ENCODE measurements at regions of chr11 and their contacts with region 1.

Region 1: DNA sequence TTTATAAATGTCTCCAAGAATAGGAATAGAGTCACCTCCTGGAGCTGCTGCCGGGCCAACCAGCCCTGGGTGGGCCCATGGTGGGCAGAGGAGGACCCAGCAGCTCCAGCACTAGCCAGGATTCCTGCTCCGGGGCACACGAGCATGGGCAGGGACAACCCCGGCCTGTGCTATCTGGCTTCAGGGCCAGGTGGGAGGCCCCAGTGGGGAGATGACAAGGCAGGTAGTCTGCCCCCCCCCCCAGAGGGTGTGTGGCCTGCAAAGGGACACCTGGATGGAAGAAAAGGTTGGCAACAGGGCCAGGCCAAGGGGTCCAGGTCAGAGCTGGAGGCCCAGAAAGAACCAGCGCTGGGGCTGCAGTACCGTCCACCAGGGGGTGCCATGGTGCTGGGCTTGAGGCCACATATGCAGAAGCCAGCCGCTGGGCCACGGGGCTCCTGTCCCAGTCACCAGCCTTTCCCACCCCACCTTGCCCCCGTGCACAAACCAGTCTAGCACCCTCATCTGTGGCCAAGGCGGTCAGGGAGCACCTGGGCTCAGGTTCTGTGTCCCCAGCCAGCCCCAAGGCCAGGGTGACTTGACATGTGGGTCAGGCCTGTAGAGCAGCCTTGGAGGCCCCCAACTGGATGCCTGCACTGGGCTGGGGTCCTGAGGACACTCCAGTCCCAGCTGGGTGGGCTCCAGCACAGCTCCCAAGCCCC is 3.5 kb downstream of the TSPAN32 start:
- DNase-seq: no peak
- H3K4me3 ChIP-seq: peak overlapping the region in 3 of 4 donors; percentile 5 to 28 (median 22)
- H3K27ac ChIP-seq: peak overlapping the region; percentile 79 to 89 (median 88)
- H3K4me1 ChIP-seq: peaks cover 50 to 59% (median 54%) of the 10 kb centered on the region in 4 donors
- H3K27me3 ChIP-seq: no peaks in the 10 kb centered on the region
- CTCF ChIP-seq: peak; percentile 94 to 96 (median 94)
- EP300 ChIP-seq: no peak
- POLR2A ChIP-seq: no peak

Region 2: DNA sequence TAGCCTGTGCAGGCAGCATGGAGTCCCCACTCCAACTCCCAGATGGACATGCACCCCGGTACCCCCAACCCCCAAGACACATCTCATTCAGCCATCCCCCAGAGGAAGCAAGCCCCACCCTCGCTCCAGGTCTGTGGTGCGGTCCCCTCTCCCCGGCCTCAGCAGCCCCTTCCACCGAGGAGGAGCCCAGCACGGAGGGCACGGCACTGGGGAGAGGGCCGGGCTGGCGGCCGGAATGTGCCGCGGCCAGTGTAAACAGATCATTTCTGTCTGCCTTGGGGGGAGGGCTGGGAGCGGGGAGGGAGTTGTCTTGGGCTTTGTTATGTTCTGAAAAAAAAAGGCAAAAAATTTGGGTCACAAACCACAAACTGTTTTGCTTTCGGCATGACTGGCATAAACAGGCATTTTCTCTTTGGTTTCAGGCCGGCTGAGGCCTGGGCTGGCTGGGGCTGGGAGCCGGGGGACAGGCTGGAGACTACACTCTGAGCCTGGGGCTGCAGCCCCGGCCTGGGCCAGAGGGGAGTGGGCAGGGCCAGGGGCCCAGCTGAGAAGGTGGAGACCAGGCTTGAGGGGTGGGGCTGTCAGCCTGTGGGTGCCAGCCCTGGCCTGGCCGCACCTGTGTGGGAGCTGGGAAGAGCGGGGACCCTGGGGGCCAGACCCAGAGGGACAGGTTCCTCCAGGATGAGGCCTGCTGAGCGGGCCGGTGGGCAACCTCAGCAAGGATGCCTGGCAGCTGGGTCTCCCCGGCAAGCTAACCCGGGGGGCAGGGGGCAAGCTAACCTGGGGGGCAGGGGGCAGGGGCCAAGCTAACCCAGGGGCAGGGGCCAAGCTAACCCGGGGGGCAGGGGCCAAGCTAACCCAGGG is 182.8 kb before region 1 on chr11:
- intact Hi-C with region 1: no loop called
- DNase-seq: no peak
- H3K4me3 ChIP-seq: no peak overlapping the region
- H3K27ac ChIP-seq: no peak overlapping the region
- H3K4me1 ChIP-seq: no peaks in the 10 kb centered on the region
- H3K27me3 ChIP-seq: peaks cover 0 to 56% (median 4%) of the 10 kb centered on the region in 4 donors
- CTCF ChIP-seq: no peak
- EP300 ChIP-seq: no peak
- POLR2A ChIP-seq: no peak

Region 3: DNA sequence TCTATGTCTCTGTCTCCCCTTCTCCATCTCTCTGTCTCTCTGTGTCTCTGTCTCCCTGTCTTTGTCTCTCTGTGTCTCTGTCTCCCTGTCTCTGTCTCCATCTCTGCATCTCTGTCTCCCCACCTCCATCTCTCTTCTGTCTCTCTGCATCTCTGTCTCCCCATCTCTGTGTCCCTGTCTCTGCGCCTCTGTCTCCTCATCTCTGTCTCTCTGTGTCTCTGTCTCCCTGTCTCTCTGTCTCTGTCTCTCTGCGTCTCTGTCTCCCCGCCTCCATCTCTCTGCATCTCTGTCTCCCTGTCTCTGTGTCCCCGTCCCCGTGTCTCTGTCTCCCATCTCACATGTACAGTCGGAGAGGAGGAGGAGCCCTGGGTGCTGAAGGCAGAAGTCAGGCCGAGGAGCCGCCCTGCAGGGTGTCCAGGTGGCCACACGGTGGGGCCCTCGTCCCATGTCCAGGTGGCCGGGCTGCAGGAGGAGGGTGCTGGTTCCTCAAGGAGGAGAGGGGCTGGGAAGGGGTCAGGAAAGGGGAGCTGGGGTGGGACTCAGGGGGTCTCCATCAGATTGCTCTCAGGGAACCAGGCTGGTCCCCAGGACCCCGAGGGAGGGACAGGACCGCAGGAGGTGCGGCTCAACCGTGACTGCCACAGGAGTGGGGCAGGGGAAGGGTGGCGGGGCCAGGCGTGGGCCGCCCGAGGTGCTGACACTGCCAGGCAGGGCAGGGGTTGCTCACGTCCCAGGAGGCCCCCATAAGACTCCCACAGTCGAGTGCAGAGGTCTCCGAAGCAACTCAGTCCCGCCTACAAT is 108.1 kb before region 1 on chr11:
- intact Hi-C with region 1: loop called (anchors 2 kb)
- DNase-seq: peak; percentile 94
- H3K4me3 ChIP-seq: no peak overlapping the region
- H3K27ac ChIP-seq: no peak overlapping the region
- H3K4me1 ChIP-seq: peaks cover 0 to 4% (median 0%) of the 10 kb centered on the region in 4 donors
- H3K27me3 ChIP-seq: peaks cover 0 to 28% (median 0%) of the 10 kb centered on the region in 4 donors
- CTCF ChIP-seq: peak; percentile 76 to 92 (median 88)
- EP300 ChIP-seq: no peak
- POLR2A ChIP-seq: no peak

Region 4: DNA sequence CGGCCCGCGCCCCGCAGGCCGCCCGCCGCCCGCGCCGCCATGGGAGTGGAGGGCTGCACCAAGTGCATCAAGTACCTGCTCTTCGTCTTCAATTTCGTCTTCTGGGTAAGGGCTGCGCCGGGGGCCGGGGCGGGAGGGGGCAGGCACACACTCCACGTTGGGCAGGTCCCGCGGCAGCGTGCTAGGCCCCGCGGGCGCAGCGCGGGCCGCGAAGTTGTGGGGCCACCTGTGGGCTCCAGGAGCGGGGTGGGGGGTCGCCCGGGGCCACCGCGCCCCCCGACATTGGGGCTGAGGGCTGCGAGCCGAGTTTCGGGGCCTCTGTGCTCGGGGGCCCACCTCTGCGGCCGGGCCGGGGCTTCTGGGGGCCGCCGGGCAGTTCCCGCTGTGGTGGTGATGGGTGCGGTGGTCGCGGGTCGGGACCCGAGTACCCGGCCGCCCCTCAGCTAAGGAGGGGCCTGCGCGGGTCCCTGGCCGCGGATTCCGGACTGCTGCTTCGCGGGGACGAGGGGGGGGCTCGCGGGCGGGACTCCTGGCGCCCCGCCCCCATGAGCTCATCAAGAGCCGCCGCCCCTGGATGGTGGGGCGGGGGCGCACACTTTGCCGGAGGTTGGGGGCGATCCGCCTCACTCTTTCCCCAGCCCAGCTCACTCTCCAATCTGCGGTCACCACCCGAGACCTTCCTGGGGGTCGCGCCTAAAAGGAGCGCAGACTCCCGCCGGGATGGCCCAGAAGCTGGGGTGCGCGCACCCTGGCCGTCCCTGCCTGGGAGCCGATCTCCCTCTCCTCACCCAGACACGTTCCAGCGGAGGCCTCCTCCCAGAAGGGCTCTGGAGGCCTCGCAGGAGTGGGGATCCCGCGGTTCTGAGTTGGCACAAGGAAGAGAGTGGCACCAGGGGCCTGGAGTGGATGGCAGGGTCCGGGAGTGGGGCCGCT is 72.5 kb after region 1 on chr11:
- intact Hi-C with region 1: loop called (anchors 2 kb)
- DNase-seq: no peak
- H3K4me3 ChIP-seq: peak overlapping the region; percentile 89 to 100 (median 100)
- H3K27ac ChIP-seq: peak overlapping the region; percentile 98 to 100 (median 100)
- H3K4me1 ChIP-seq: peaks cover 50 to 64% (median 53%) of the 10 kb centered on the region in 4 donors
- H3K27me3 ChIP-seq: no peaks in the 10 kb centered on the region
- CTCF ChIP-seq: no peak
- EP300 ChIP-seq: no peak
- POLR2A ChIP-seq: no peak

Region 5: GRCh38 chr11:2400069-2400760 is 94.9 kb after region 1 on chr11 and contains the start of gene TSSC4:
- intact Hi-C with region 1: no loop called
- DNase-seq: peak; percentile 100
- H3K4me3 ChIP-seq: peak within 1 kb of the TSS; percentile 72 to 86 (median 86)
- H3K27ac ChIP-seq: peak within 1 kb of the TSS; percentile 93 to 99 (median 96)
- H3K4me1 ChIP-seq: peaks cover 25 to 45% (median 31%) of the 10 kb centered on the region in 4 donors
- H3K27me3 ChIP-seq: no peaks in the 10 kb centered on the region
- CTCF ChIP-seq: peak; percentile 94 to 100 (median 99)
- EP300 ChIP-seq: peak; percentile 97
- POLR2A ChIP-seq: peak; percentile 91
- total RNA-seq, gene TSSC4: 46.9 to 76.9 (median 70.6) TPM

Region 6: GRCh38 chr11:2420502-2421225 is 115.4 kb after region 1 on chr11:
- intact Hi-C with region 1: loop called (anchors 1 kb)
- DNase-seq: no peak
- H3K4me3 ChIP-seq: peak overlapping the region in 2 of 4 donors; percentile 15 to 29
- H3K27ac ChIP-seq: no peak overlapping the region
- H3K4me1 ChIP-seq: peaks cover 5 to 19% (median 15%) of the 10 kb centered on the region in 4 donors
- H3K27me3 ChIP-seq: peaks cover 0 to 33% (median 0%) of the 10 kb centered on the region in 4 donors
- CTCF ChIP-seq: peak; percentile 90 to 95 (median 92)
- EP300 ChIP-seq: no peak
- POLR2A ChIP-seq: no peak

Region 7: GRCh38 chr11:2489083-2489482 is 183.8 kb after region 1 on chr11:
- intact Hi-C with region 1: no loop called
- DNase-seq: peak; percentile 53
- H3K4me3 ChIP-seq: no peak overlapping the region
- H3K27ac ChIP-seq: no peak overlapping the region
- H3K4me1 ChIP-seq: no peaks in the 10 kb centered on the region
- H3K27me3 ChIP-seq: peaks cover 0 to 36% (median 0%) of the 10 kb centered on the region in 4 donors
- CTCF ChIP-seq: no peak
- EP300 ChIP-seq: no peak
- POLR2A ChIP-seq: no peak

Region 8: GRCh38 chr11:2898366-2899079 is 593.2 kb after region 1 on chr11:
- intact Hi-C with region 1: loop called (anchors 5 kb)
- DNase-seq: peak; percentile 94
- H3K4me3 ChIP-seq: no peak overlapping the region
- H3K27ac ChIP-seq: peak overlapping the region; percentile 54 to 73 (median 64)
- H3K4me1 ChIP-seq: peaks cover 28 to 48% (median 44%) of the 10 kb centered on the region in 4 donors
- H3K27me3 ChIP-seq: no peaks in the 10 kb centered on the region
- CTCF ChIP-seq: no peak
- EP300 ChIP-seq: no peak
- POLR2A ChIP-seq: no peak